CD4-positive, alpha-beta memory T cell (primary cell): ENCODE measurements at regions of chr19 and their contacts with region 1.

Region 1: DNA sequence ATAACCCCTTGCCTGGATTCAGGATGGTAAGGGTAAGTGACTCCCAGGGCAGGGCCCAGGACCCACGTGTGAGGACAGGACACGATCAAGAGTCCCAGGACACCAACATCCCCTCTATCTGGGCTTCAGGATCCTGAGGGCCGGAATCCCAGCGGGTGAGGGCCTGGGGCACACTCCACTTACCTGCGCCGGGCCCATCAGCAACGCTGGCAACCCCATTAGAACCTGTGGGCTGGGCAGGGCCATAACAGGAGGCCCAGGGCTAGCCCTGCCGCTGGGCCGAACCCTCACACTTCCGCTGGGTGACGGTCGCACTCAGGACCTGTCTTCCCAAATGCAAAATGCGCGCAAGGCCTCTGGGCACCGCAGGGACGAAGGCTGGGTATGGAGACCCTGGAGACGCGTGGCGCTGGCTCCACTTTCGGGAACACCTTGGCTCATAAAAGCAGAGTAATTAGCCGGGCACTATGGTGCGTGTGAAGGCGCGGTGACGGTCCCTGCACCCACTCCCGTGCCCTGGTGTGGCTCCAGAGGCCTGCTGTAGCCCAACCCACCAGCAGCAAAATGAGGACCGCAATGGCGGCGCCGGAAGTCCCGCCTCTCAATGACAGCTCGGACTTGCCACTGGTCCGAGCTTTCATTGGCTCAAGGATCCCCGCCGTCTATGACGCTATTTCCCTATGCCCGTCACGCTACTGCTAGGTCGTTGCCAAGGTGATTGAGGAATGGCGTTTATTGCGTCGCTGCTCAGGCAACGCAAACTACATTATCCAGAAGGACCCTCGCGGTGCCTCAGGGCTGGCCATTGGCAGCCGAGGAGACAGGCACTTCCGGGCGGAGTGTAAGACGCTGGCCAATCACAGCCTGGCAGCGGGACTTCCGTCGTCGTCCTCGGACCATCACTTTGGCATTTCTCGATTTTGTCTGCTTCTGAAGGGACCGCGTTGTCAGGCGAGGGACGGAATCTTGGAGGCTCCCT is at the start of gene ZNF132:
- DNase-seq: peak; percentile 93 to 99 (median 98)
- H3K4me3 ChIP-seq: peak within 1 kb of the TSS; percentile 72 to 80
- H3K4me3 Mint-ChIP-seq: peak within 1 kb of the TSS; percentile 87 to 97 (median 96)
- H3K27ac ChIP-seq: peak within 1 kb of the TSS; percentile 69
- H3K27ac Mint-ChIP-seq: peak within 1 kb of the TSS; percentile 82 to 100 (median 99)
- H3K4me1 ChIP-seq: peaks cover 18% of the 10 kb centered on the region
- H3K4me1 Mint-ChIP-seq: peaks cover 12 to 30% (median 22%) of the 10 kb centered on the region in 4 donors
- H3K27me3 ChIP-seq: no peaks in the 10 kb centered on the region
- H3K27me3 Mint-ChIP-seq: peaks cover 2 to 3% of the 10 kb centered on the region in 2 donors
- total RNA-seq, gene ZNF132: 9.5 to 11.7 TPM

Region 2: GRCh38 chr19:58326914-58327726 is 112.7 kb before region 1 on chr19 and contains the start of gene ZSCAN22:
- CTCF ChIA-PET with region 1: no interaction called
- POLR2A ChIA-PET with region 1: no interaction called
- intact Hi-C with region 1: loop called (anchors 2 kb)
- DNase-seq: peak; percentile 80 to 89 (median 83)
- H3K4me3 ChIP-seq: peak within 1 kb of the TSS; percentile 32 to 77
- H3K4me3 Mint-ChIP-seq: no peak within 1 kb of the TSS
- H3K27ac ChIP-seq: peak within 1 kb of the TSS; percentile 80
- H3K27ac Mint-ChIP-seq: no peak within 1 kb of the TSS
- H3K4me1 ChIP-seq: peaks cover 25% of the 10 kb centered on the region
- H3K4me1 Mint-ChIP-seq: peaks cover 0 to 2% (median under 1%) of the 10 kb centered on the region in 4 donors
- H3K27me3 ChIP-seq: no peaks in the 10 kb centered on the region
- H3K27me3 Mint-ChIP-seq: no peaks in the 10 kb centered on the region
- total RNA-seq, gene ZSCAN22: 5.0 to 5.3 TPM

Region 3: DNA sequence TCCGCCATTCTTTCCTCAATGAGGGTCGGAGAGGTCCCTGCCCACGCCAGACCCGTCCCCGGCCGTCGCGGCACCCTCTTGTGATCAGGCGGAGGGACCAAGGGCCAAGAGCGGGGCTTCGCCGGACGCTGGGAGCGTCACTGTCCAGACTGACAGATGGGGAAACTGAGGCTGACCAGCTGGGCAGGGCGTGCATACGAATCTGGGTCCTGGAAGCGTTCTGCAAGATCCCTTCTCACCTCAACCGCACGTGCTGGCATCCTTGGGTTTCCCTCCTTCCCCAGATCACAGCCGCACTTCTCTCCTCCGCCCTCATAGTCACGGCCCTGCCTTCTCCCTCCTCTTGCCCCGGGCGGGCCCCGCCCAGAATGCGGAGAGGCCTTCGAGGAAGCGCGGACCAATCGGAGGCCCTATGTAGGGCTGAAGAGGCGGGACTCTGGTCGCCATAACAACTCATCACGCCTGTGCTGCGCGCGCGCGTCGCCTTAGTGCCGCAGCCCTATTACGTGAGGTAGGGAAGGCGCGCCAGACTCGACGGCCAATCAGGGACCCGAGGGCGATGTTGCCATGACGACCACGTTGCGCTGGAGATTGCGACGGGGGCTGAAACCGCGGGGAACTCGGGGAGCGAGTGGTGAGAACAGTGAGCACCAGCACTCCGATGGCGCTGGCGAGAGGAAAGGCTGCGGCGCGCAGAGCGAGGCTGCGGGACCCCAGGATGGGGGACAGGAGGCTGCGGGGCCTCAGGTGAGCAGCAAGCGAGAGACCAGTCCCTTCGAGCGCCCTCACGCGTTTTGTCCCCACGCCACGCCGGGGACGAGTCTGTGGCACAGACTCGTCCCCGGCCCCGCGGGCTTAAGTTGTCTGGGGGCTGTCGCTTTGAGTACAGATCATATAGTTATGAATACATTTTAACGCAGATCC is 38.7 kb before region 1 on chr19:
- CTCF ChIA-PET with region 1: interaction called, 3 read pairs
- POLR2A ChIA-PET with region 1: interaction called, 3 read pairs
- intact Hi-C with region 1: loop called (anchors 1 kb)
- DNase-seq: peak; percentile 98 to 100 (median 99)
- H3K4me3 ChIP-seq: peak overlapping the region; percentile 57 to 59
- H3K4me3 Mint-ChIP-seq: peak overlapping the region; percentile 87 to 97 (median 91)
- H3K27ac ChIP-seq: peak overlapping the region; percentile 74
- H3K27ac Mint-ChIP-seq: peak overlapping the region; percentile 89 to 99 (median 97)
- H3K4me1 ChIP-seq: peaks cover 20% of the 10 kb centered on the region
- H3K4me1 Mint-ChIP-seq: peaks cover 5 to 20% (median 10%) of the 10 kb centered on the region in 4 donors
- H3K27me3 ChIP-seq: peaks cover 8% of the 10 kb centered on the region
- H3K27me3 Mint-ChIP-seq: peaks cover 6 to 9% of the 10 kb centered on the region in 2 donors

Region 4: GRCh38 chr19:58451358-58452101 is 11.7 kb after region 1 on chr19 and contains the start of gene ZNF324B:
- CTCF ChIA-PET with region 1: no interaction called
- POLR2A ChIA-PET with region 1: interaction called, 18 read pairs
- intact Hi-C with region 1: loop called (anchors 1 kb)
- DNase-seq: peak; percentile 96 to 97 (median 96)
- H3K4me3 ChIP-seq: peak within 1 kb of the TSS; percentile 60 to 69
- H3K4me3 Mint-ChIP-seq: peak within 1 kb of the TSS; percentile 85 to 93 (median 88)
- H3K27ac ChIP-seq: peak within 1 kb of the TSS; percentile 67
- H3K27ac Mint-ChIP-seq: peak within 1 kb of the TSS; percentile 67 to 93 (median 84)
- H3K4me1 ChIP-seq: peaks cover 7% of the 10 kb centered on the region
- H3K4me1 Mint-ChIP-seq: peaks cover 13 to 31% (median 19%) of the 10 kb centered on the region in 4 donors
- H3K27me3 ChIP-seq: no peaks in the 10 kb centered on the region
- H3K27me3 Mint-ChIP-seq: peaks cover 6 to 11% of the 10 kb centered on the region in 2 donors
- total RNA-seq, gene ZNF324B: 13.1 to 13.7 TPM

Region 5: DNA sequence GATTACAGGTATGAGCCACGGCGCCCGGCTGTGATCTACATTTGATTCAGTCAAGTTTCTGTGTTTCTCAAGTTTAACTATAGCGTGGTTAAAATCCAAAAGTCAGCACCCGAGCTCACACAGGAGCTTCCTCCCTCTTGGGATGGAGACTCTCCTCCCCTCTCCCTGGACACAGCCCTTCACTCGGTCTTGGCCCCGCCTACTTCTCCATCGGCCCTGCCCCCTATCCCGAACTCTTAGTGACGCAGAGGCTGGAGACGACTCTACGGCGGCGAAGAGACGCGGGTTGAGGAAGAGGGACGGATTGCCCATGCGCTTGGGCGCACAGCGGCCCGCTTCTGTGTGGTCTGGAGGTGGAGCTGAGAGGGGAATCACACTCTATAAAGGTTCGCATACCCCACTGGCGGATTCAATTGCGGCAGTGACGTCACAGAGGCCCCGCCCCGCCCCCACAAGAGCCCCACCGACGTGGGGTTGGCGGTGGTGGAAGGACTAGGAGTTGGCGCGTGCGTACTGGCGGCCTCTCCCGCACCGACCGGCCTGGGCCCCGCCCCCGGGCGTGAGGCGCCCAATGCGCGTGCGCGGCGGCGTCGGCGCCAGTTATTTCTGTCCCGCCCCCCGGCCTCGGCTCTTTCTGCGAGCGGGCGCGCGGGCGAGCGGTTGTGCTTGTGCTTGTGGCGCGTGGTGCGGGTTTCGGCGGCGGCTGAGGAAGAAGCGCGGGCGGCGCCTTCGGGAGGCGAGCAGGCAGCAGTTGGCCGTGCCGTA is 104.1 kb after region 1 on chr19 and contains the start of gene TRIM28:
- CTCF ChIA-PET with region 1: no interaction called
- POLR2A ChIA-PET with region 1: no interaction called
- intact Hi-C with region 1: loop called (anchors 1 kb)
- DNase-seq: peak; percentile 100
- H3K4me3 ChIP-seq: peak within 1 kb of the TSS; percentile 86 to 87
- H3K4me3 Mint-ChIP-seq: peak within 1 kb of the TSS; percentile 91 to 97 (median 95)
- H3K27ac ChIP-seq: peak within 1 kb of the TSS; percentile 78
- H3K27ac Mint-ChIP-seq: peak within 1 kb of the TSS; percentile 95 to 100 (median 99)
- H3K4me1 ChIP-seq: peaks cover 30% of the 10 kb centered on the region
- H3K4me1 Mint-ChIP-seq: peaks cover 20 to 39% (median 27%) of the 10 kb centered on the region in 4 donors
- H3K27me3 ChIP-seq: no peaks in the 10 kb centered on the region
- H3K27me3 Mint-ChIP-seq: peaks cover 0 to 7% of the 10 kb centered on the region in 2 donors
- total RNA-seq, gene TRIM28: 342 to 348 TPM